Panc1 (cell line): ENCODE measurements at regions of chr14 and their contacts with region 1.

Region 1: GRCh38 chr14:30994681-30995620 is 30.5 kb upstream of the AP4S1 start:
- DNase-seq: no peak
- ATAC-seq: no peak
- H3K4me3 ChIP-seq: no peak overlapping the region
- H3K27ac ChIP-seq: no peak overlapping the region
- H3K4me1 ChIP-seq: peaks cover 13% of the 10 kb centered on the region
- H3K27me3 ChIP-seq: no peaks in the 10 kb centered on the region
- CTCF ChIP-seq: no peak

Region 2: DNA sequence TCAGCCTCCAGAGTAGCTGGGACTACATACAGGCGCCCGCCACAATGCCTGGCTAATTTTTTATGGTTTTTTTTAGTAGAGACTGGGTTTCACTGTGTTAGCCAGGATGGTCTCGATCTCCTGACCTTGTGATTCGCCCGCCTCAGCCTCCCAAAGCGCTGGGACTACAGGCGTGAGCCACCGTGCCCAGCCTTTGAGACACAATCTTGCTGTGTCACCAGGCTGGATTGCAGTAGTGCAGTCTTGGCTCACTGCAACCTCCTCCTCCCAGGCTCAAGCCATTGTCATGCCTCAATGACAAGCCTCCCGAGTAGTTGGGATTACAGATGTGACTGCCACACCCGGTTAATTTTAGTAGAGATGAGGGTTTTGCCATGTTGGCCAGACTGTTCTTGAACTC is 52.6 kb after region 1 on chr14:
- CTCF ChIA-PET with region 1: no interaction called
- POLR2A ChIA-PET with region 1: interaction called, 12 read pairs
- in situ Hi-C with region 1: no loop called
- intact Hi-C with region 1: no loop called
- DNase-seq: no peak
- ATAC-seq: no peak
- H3K4me3 ChIP-seq: no peak overlapping the region
- H3K27ac ChIP-seq: no peak overlapping the region
- H3K4me1 ChIP-seq: no peaks in the 10 kb centered on the region
- H3K27me3 ChIP-seq: no peaks in the 10 kb centered on the region
- CTCF ChIP-seq: no peak

Region 3: DNA sequence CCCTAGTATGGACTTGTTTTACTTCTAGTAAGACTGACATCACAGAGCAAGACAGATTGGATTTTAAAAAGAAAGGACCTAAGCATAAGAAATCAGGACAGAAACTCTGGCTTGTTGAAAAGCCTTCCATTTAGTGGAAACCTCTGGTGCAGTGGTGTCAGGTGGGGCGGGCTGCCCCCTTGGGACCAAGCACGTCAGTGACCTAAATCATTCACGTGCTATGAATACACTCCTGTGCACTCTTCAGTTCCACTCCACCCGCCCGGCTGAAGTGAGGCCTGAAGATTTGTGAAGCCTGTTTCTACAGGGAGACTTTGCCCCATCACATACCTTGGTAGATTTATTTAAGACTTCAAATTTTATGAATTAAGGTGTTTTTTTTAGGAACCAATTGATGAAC is 89.4 kb after region 1 on chr14:
- CTCF ChIA-PET with region 1: no interaction called
- POLR2A ChIA-PET with region 1: no interaction called
- in situ Hi-C with region 1: no loop called
- intact Hi-C with region 1: no loop called
- DNase-seq: no peak
- ATAC-seq: no peak
- H3K4me3 ChIP-seq: no peak overlapping the region
- H3K27ac ChIP-seq: peak overlapping the region; percentile 54; the same call in 1 of the 2 replicates
- H3K4me1 ChIP-seq: no peaks in the 10 kb centered on the region
- H3K27me3 ChIP-seq: no peaks in the 10 kb centered on the region
- CTCF ChIP-seq: 0 out of 2 replicates have a peak, but pooled peaks have one; percentile 15

Region 4: GRCh38 chr14:31096255-31096654 is 101.3 kb after region 1 on chr14:
- CTCF ChIA-PET with region 1: no interaction called
- POLR2A ChIA-PET with region 1: no interaction called
- in situ Hi-C with region 1: no loop called
- intact Hi-C with region 1: no loop called
- DNase-seq: no peak
- ATAC-seq: no peak
- H3K4me3 ChIP-seq: no peak overlapping the region
- H3K27ac ChIP-seq: no peak overlapping the region; the same call in 1 of the 2 replicates
- H3K4me1 ChIP-seq: peaks cover 8% of the 10 kb centered on the region
- H3K27me3 ChIP-seq: no peaks in the 10 kb centered on the region
- CTCF ChIP-seq: no peak